ENCODE measurements at regions of chr14 and their contacts with region 1.

Region 1: DNA sequence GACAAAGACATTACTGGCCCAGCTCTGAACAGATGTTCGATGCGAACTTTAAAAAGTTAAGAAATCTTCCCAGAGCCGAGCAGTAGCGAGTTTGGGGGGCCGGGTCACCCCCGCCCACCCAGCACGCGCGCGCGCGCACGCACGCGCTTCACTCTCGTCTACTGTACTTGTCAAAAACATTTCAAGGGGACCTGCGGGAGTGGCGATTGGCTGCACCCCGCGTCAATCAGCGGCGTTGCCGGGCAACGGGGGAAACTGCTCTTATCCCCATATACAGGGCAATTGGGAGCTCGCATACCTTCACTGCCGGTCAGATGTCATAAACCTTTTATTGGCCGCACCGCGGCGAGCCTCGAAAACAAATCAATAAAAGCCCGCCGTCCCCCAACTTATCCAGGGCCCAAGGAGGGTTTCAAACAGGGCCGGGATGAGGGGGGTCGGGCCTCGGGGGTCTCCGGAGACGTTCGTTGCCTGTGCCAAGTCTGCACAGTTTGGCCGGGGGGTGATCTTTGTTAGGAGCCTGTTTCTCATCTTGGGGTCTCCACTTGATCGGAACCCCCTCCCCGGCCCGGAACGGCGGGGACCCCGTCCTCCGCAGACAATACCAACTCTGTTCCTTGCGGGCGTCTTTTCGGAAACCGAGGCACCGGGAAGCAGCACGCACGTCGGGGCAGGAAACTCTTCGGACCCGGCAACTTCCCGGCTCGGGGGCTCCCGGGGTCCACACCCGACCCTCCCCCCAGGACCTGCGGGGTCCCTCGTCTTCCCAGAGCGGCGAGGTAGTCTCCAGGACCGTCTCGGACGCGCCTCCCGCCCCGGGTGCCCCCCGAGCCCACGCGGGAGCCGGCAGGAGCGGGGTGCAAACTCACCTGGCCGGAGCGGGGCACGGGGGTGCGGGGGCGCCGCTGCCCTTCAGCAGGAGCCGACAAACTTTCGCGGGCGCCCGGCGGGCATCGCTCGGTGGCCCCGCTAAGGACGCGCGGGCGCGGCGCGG is 734 bp downstream of the FOXN3 start:
- DNase-seq: peak; percentile 99
- H3K4me3 ChIP-seq: peak overlapping the region; percentile 88
- H3K4me3 Mint-ChIP-seq: peak overlapping the region; percentile 88
- H3K27ac Mint-ChIP-seq: peak overlapping the region; percentile 83
- H3K4me1 ChIP-seq: no peaks in the 10 kb centered on the region; the same call in 1 of the 2 replicates
- H3K4me1 Mint-ChIP-seq: peaks cover 18% of the 10 kb centered on the region
- H3K27me3 ChIP-seq: no peaks in the 10 kb centered on the region
- H3K27me3 Mint-ChIP-seq: no peaks in the 10 kb centered on the region
- CTCF ChIP-seq: no peak

Region 2: DNA sequence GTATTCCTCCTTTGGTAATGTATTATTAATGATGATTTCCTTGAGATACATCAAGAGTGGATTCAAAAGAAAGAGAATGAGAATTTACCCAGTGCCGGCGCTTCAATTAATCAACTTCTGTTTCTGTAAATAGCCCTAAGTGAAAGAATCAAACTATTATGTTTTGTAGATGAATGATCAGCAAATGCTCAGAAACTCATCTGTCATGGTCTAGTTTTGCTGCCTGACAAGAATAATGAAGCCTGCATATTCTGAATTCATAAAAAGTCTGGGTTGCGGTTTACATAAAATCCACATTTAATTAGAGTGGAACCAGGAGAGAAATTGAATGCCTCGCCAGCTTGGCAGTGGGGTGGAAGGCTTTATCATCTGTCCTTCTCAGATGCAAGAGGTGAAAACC is 1748.6 kb before region 1 on chr14:
- CTCF ChIA-PET with region 1: no interaction called
- POLR2A ChIA-PET with region 1: no interaction called
- intact Hi-C with region 1: no loop called
- DNase-seq: no peak
- H3K4me3 ChIP-seq: no peak overlapping the region
- H3K4me3 Mint-ChIP-seq: no peak overlapping the region
- H3K27ac Mint-ChIP-seq: no peak overlapping the region
- H3K4me1 ChIP-seq: no peaks in the 10 kb centered on the region
- H3K4me1 Mint-ChIP-seq: no peaks in the 10 kb centered on the region
- H3K27me3 ChIP-seq: no peaks in the 10 kb centered on the region
- H3K27me3 Mint-ChIP-seq: no peaks in the 10 kb centered on the region
- CTCF ChIP-seq: no peak

Region 3: GRCh38 chr14:89040460-89041259 is 375.6 kb before region 1 on chr14:
- CTCF ChIA-PET with region 1: no interaction called
- POLR2A ChIA-PET with region 1: no interaction called
- intact Hi-C with region 1: loop called (anchors 1 kb)
- DNase-seq: peak; percentile 82 to 93
- H3K4me3 ChIP-seq: peak overlapping the region; percentile 44
- H3K4me3 Mint-ChIP-seq: peak overlapping the region; percentile 77
- H3K27ac Mint-ChIP-seq: peak overlapping the region; percentile 89
- H3K4me1 ChIP-seq: 0 out of 2 replicates have a peak, but pooled peaks cover 4% of the 10 kb centered on the region
- H3K4me1 Mint-ChIP-seq: peaks cover 7% of the 10 kb centered on the region
- H3K27me3 ChIP-seq: no peaks in the 10 kb centered on the region
- H3K27me3 Mint-ChIP-seq: no peaks in the 10 kb centered on the region
- CTCF ChIP-seq: peak; percentile 90 to 92

Region 4: GRCh38 chr14:89252887-89253547 is 163.3 kb before region 1 on chr14:
- CTCF ChIA-PET with region 1: no interaction called
- POLR2A ChIA-PET with region 1: no interaction called
- intact Hi-C with region 1: loop called (anchors 5 kb)
- DNase-seq: peak in 1 of 2 experiments; percentile 34
- H3K4me3 ChIP-seq: no peak overlapping the region
- H3K4me3 Mint-ChIP-seq: no peak overlapping the region
- H3K27ac Mint-ChIP-seq: no peak overlapping the region
- H3K4me1 ChIP-seq: peaks cover 4% of the 10 kb centered on the region; the same call in 1 of the 2 replicates
- H3K4me1 Mint-ChIP-seq: peaks cover 6% of the 10 kb centered on the region
- H3K27me3 ChIP-seq: no peaks in the 10 kb centered on the region
- H3K27me3 Mint-ChIP-seq: no peaks in the 10 kb centered on the region
- CTCF ChIP-seq: peak; percentile 11 to 20

Region 5: DNA sequence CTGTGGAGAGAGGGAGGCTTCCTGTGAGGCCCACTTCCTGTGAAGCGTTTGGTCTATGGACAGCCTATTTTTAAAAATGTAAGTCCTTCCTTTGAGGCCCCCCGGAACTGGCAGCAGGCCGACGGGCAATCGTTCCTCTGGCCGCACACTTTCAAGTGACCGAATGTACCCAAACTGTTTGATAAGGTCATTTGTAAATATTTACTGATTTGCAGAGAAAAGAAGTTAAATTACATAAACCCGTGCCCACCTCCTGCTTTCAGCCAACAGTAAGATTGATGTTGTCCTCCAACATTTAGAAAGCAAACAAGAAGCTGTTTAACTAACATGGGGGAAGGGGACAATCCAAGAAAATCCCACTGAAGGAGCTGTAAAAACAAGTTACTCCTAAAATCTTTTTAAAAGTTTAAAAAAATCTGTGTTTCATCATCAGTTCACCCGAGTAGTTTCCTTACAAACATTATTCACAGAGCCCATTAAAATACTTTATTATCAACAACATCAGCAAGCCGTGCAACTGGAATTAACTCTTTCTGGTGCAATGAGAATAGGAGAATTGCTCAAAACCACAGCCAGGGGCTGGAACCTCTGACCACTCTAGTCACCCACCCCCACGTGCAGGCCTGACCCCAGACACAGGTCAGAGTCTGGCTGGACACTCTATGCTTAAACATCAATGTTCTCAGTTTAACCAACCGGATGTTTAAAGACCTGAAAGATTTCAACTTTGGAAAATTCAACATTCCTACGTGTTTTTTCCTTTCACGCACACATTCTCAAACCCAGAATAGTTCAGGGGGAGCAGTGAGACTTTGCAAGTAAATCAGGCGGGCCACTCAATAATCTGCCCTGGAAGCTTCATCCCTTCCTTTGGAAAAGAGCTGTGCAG is 64.5 kb before region 1 on chr14:
- CTCF ChIA-PET with region 1: no interaction called
- POLR2A ChIA-PET with region 1: no interaction called
- intact Hi-C with region 1: loop called (anchors 1 kb)
- DNase-seq: peak; percentile 67 to 73
- H3K4me3 ChIP-seq: peak overlapping the region; percentile 11; the same call in 1 of the 2 replicates
- H3K4me3 Mint-ChIP-seq: peak overlapping the region; percentile 62
- H3K27ac Mint-ChIP-seq: peak overlapping the region; percentile 73
- H3K4me1 ChIP-seq: peaks cover 15% of the 10 kb centered on the region
- H3K4me1 Mint-ChIP-seq: peaks cover 7% of the 10 kb centered on the region
- H3K27me3 ChIP-seq: no peaks in the 10 kb centered on the region
- H3K27me3 Mint-ChIP-seq: no peaks in the 10 kb centered on the region
- CTCF ChIP-seq: peak in 1 of 2 experiments; percentile 3

Region 6: GRCh38 chr14:89618811-89619551 is 202.7 kb after region 1 on chr14:
- CTCF ChIA-PET with region 1: no interaction called
- POLR2A ChIA-PET with region 1: no interaction called
- intact Hi-C with region 1: loop called (anchors 5 kb)
- DNase-seq: peak; percentile 48 to 76
- H3K4me3 ChIP-seq: peak overlapping the region; percentile 80
- H3K4me3 Mint-ChIP-seq: peak overlapping the region; percentile 69
- H3K27ac Mint-ChIP-seq: no peak overlapping the region
- H3K4me1 ChIP-seq: no peaks in the 10 kb centered on the region; the same call in 1 of the 2 replicates
- H3K4me1 Mint-ChIP-seq: no peaks in the 10 kb centered on the region
- H3K27me3 ChIP-seq: no peaks in the 10 kb centered on the region
- H3K27me3 Mint-ChIP-seq: no peaks in the 10 kb centered on the region
- CTCF ChIP-seq: no peak

Region 7: DNA sequence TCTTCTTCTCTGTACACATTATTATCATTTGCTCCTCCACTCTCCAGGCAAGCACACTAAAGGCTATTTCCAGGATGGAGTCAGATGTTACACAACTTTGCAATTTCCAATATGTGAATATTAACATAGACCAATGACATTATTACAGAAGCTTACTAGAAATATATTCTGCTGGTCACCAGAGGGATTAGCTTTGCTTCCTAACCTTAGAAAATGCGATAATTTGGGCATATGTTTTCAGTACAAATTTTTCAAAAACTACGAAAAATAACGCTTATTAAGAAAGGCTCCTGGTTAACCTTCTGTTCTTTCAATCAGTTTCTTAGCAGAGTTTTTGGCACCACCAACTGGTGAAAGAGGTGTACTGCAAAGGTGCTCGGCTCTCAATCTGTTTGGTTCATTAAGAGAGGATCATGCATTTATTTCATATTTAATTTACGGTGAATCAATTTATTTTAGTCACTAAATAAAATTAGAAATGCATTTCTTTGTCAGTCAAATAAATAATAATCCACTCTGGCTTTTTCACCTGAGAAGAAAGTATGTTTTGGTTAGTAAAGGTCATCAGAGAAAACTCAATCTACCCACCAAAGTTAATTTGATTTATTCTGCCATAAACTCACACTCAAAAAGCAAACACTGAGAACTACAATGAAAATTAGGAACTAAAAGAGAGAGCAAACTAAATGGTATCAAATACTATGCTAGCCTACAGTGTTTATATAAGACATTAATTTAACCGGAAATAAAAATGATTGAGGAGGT is 499.0 kb after region 1 on chr14:
- CTCF ChIA-PET with region 1: no interaction called
- POLR2A ChIA-PET with region 1: no interaction called
- intact Hi-C with region 1: loop called (anchors 10 kb)
- DNase-seq: peak; percentile 38 to 58
- H3K4me3 ChIP-seq: no peak overlapping the region
- H3K4me3 Mint-ChIP-seq: no peak overlapping the region
- H3K27ac Mint-ChIP-seq: no peak overlapping the region
- H3K4me1 ChIP-seq: no peaks in the 10 kb centered on the region; the same call in 1 of the 2 replicates
- H3K4me1 Mint-ChIP-seq: peaks cover 14% of the 10 kb centered on the region
- H3K27me3 ChIP-seq: no peaks in the 10 kb centered on the region
- H3K27me3 Mint-ChIP-seq: no peaks in the 10 kb centered on the region
- CTCF ChIP-seq: peak; percentile 77 to 87